Esophagus muscularis mucosa (tissue), 4 donors: ENCODE measurements at regions of chr9 and their contacts with region 1.

Region 1: DNA sequence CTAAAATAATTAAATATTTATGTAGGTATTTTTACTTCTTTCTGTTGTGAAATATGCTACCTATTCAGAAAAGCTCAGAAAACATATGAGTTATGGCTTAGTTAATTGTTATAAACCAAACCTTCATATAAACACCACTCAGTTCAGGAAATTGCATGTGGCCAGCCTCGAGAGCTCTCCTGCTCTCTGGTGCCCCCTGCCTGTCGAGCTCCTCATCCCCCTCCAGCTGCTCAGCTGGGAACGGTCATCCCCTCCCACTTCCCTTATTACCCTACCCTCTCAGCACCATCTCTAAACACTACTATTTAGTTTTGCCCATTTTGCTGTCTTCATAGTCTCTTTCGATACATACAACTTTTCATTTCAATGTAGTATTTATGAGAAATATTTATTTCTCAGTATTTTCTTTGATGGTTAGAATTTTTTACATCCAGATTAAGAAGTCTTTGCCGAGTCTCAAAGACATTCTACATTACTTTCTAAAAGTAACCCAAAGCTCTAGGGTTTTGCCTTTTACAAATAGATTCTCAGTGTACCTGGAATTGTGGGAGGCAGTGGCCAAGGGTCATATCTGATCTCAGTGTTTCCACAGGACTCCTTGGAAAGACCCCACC is 51.2 kb upstream of the SEMA4D start:
- DNase-seq: no peak
- H3K4me3 ChIP-seq: no peak overlapping the region
- H3K27ac ChIP-seq: no peak overlapping the region
- H3K4me1 ChIP-seq: no peaks in the 10 kb centered on the region
- H3K27me3 ChIP-seq: no peaks in the 10 kb centered on the region
- CTCF ChIP-seq: peak; percentile 85 to 94 (median 88)
- EP300 ChIP-seq: no peak
- POLR2A ChIP-seq: no peak

Region 2: DNA sequence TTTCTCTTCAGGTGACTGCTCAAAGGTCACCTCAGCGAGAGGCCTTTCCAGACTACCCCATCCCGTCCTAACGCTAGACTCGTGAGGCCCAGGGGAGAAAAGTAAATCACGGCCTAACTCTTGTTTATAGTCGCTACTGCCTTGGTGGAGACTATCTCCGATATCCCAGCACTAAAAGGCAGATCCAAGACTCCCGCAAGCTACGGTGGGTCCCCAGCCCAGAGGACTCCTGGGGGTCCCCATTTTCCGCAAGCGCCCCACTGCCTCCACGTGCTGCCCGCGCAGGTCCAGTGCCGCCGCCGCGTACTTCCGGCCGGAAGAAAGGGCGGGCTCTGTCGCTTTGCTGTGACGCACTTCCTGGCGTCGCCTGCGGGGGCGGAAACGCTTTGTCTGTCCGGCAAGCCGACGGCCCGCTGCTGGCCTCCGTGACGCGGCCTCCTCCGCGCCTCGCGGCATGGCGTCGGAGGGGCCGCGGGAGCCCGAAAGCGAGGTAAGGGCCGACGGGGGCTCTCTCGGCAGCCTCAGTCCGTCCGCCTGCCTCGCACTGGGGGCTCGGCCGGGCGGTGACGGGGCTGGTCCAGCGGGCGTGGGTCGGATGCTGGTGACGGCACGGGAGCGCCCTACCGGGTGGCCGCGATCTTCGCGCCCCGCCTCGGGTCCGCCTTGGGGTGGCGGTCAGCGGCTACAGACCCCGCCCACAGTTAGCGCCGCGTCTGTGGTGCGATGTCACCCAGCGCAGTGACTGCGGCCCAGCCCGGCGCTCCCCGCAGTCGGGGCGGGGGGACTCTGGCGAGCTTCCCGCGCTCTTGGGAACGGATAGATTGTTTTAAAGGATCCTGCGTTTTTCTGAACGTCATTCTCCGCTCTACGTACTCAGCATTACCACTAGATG is 230.8 kb before region 1 on chr9 and contains the start of gene SECISBP2:
- intact Hi-C with region 1: loop called (anchors 2 kb)
- DNase-seq: peak; percentile 98
- H3K4me3 ChIP-seq: peak within 1 kb of the TSS; percentile 70 to 90 (median 82)
- H3K27ac ChIP-seq: peak within 1 kb of the TSS; percentile 97 to 100 (median 99)
- H3K4me1 ChIP-seq: peaks cover 26 to 56% (median 46%) of the 10 kb centered on the region in 4 donors
- H3K27me3 ChIP-seq: no peaks in the 10 kb centered on the region
- CTCF ChIP-seq: peak; percentile 63 to 73 (median 72)
- EP300 ChIP-seq: no peak
- POLR2A ChIP-seq: peak; percentile 93
- total RNA-seq, gene SECISBP2: 24.0 to 32.8 (median 29.0) TPM

Region 3: DNA sequence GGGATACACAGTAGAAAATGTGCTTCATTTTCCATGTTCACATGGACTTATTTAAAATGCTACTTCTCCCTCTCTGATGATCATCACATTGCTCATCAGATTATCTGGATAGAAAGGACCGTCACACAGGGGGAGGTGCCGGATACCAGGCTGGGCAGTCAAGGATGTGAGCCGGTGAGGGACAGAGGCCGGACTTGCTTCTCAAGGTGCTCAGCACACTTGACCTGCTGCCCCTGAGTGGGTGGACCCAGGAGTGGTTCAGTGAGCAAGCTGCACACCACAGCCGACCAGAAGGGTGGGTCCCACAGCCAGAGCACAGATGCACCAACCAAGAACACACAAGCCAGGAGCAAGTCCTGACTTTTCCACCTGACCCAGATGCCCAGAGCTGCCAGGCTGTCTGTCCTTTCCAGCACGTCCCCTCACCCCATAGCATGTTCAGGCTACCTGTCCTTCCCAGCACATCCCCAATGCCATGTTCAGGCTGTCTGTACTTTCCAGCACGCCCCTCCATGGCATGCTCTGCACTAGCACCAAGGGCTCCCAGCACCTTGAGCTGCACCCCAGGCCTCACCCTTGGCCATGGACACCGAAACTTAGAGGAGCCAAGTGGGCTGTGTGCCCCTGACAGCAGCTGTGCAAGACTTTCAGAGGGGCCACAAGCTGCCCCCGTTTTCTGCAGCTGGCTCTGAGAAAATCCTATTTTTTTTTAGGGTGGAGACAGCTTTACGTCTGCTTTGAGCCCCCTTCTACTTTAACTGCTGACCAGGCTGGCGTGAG is 153.0 kb before region 1 on chr9:
- intact Hi-C with region 1: loop called (anchors 10 kb)
- DNase-seq: no peak
- H3K4me3 ChIP-seq: no peak overlapping the region
- H3K27ac ChIP-seq: no peak overlapping the region
- H3K4me1 ChIP-seq: no peaks in the 10 kb centered on the region
- H3K27me3 ChIP-seq: no peaks in the 10 kb centered on the region
- CTCF ChIP-seq: no peak
- EP300 ChIP-seq: no peak
- POLR2A ChIP-seq: no peak

Region 4: GRCh38 chr9:89437000-89437631 is 112.0 kb before region 1 on chr9:
- intact Hi-C with region 1: no loop called
- DNase-seq: no peak
- H3K4me3 ChIP-seq: no peak overlapping the region
- H3K27ac ChIP-seq: no peak overlapping the region
- H3K4me1 ChIP-seq: peaks cover 4 to 32% (median 19%) of the 10 kb centered on the region in 4 donors
- H3K27me3 ChIP-seq: no peaks in the 10 kb centered on the region
- CTCF ChIP-seq: no peak
- EP300 ChIP-seq: no peak
- POLR2A ChIP-seq: no peak